ENCODE measurements at regions of chr3 and their contacts with region 1.

Region 1: GRCh38 chr3:150546226-150547044 is at the starts of genes EIF2A and SERP1:
- DNase-seq: peak; percentile 88
- H3K4me3 ChIP-seq: peak within 1 kb of the TSS; percentile 67 to 98 (median 86)
- H3K27ac ChIP-seq: peak within 1 kb of the TSS; percentile 97 to 100 (median 100)
- H3K4me1 ChIP-seq: peaks cover 5 to 42% (median 25%) of the 10 kb centered on the region in 3 donors
- H3K27me3 ChIP-seq: no peaks in the 10 kb centered on the region
- CTCF ChIP-seq: peak in 2 of 6 experiments; percentile 4 to 14
- POLR2A ChIP-seq: peak; percentile 46 to 99 (median 94)
- total RNA-seq, gene EIF2A: 67.7 to 233 (median 136) TPM
- total RNA-seq, gene SERP1: 137 to 273 (median 206) TPM

Region 2: GRCh38 chr3:149466192-149466591 is 1080.2 kb before region 1 on chr3:
- intact Hi-C with region 1: no loop called
- DNase-seq: no peak
- H3K4me3 ChIP-seq: no peak overlapping the region
- H3K27ac ChIP-seq: peak overlapping the region in 1 of 4 donors; percentile 49
- H3K4me1 ChIP-seq: peaks cover 0 to 10% (median 0%) of the 10 kb centered on the region in 3 donors
- H3K27me3 ChIP-seq: no peaks in the 10 kb centered on the region
- CTCF ChIP-seq: no peak
- POLR2A ChIP-seq: no peak

Region 3: GRCh38 chr3:150408221-150409102 is 138.0 kb before region 1 on chr3 and contains the start of gene TSC22D2:
- intact Hi-C with region 1: loop called (anchors 10 kb)
- DNase-seq: peak; percentile 78
- H3K4me3 ChIP-seq: peak within 1 kb of the TSS; percentile 68 to 97 (median 90)
- H3K27ac ChIP-seq: peak within 1 kb of the TSS; percentile 99 to 100 (median 100)
- H3K4me1 ChIP-seq: peaks cover 0 to 37% (median 0%) of the 10 kb centered on the region in 3 donors
- H3K27me3 ChIP-seq: no peaks in the 10 kb centered on the region
- CTCF ChIP-seq: peak in 5 of 6 experiments; percentile 7 to 32 (median 27)
- POLR2A ChIP-seq: peak in 3 of 4 donors; percentile 95 to 99 (median 96)
- total RNA-seq, gene TSC22D2: 8.5 to 20.0 (median 15.2) TPM